ENCODE measurements at regions of chr14 and their contacts with region 1.

Region 1: GRCh38 chr14:105300792-105301533 is at the start of gene BRF1:
- DNase-seq: peak; percentile 100
- ATAC-seq: peak; percentile 92
- H3K4me3 Mint-ChIP-seq: peak within 1 kb of the TSS; percentile 86
- H3K27ac Mint-ChIP-seq: peak within 1 kb of the TSS; percentile 86
- H3K4me1 Mint-ChIP-seq: peaks cover 39% of the 10 kb centered on the region
- H3K27me3 Mint-ChIP-seq: no peaks in the 10 kb centered on the region
- total RNA-seq, gene BRF1: 20.0 to 28.1 TPM

Region 2: DNA sequence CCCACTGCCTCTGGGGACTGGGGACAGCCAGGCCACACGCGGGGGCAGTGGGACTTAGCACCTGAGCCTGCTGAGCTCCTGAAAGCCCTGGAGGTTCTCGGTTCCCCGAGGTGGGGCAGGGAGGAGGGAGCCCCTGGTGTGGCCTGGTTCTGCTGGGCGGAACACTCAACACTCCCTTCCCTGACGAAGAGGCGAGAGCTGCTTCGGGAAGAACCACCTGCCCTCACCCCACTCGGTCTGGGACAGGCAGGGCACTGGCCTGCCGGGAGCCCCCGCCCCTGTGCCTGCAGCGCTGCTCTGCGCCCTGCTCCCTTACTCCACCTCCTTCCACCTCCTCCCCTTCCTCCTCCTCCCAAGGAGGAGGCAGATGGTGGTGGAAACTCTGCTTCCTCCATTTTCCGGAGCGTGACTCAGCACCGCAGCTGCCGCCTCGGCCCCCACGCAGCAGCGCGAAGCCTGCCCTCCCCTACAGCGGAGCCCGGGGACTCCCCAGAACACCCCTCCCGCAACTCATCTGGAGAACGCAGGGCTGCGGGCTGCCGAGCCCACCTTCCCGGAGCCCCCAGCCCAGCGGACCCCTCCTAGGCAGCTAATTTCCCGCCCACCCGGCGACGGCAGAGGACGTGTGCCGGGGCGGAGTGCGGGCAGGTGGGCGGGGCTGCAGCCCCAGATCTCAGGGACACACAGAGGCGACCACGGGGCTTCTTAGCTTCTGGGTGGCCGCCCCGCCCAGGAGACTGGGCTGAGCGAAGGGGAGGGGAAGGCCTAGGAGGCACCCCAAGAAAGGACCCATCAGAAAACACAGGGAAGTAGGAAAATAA is 623.2 kb before region 1 on chr14:
- CTCF ChIA-PET with region 1: no interaction called
- POLR2A ChIA-PET with region 1: no interaction called
- intact Hi-C with region 1: loop called in 1 of 2 experiments (anchors 5 kb)
- DNase-seq: peak; percentile 88
- ATAC-seq: peak; percentile 81
- H3K4me3 Mint-ChIP-seq: peak overlapping the region; percentile 62
- H3K27ac Mint-ChIP-seq: peak overlapping the region; percentile 79
- H3K4me1 Mint-ChIP-seq: peaks cover 14% of the 10 kb centered on the region
- H3K27me3 Mint-ChIP-seq: no peaks in the 10 kb centered on the region

Region 3: GRCh38 chr14:104985675-104986525 is 315.1 kb before region 1 on chr14 and contains the start of gene CLBA1:
- CTCF ChIA-PET with region 1: no interaction called
- POLR2A ChIA-PET with region 1: no interaction called
- intact Hi-C with region 1: loop called in 1 of 2 experiments (anchors 1 kb)
- DNase-seq: peak; percentile 93
- ATAC-seq: peak; percentile 99
- H3K4me3 Mint-ChIP-seq: peak within 1 kb of the TSS; percentile 64
- H3K27ac Mint-ChIP-seq: peak within 1 kb of the TSS; percentile 47
- H3K4me1 Mint-ChIP-seq: peaks cover 5% of the 10 kb centered on the region
- H3K27me3 Mint-ChIP-seq: no peaks in the 10 kb centered on the region
- total RNA-seq, gene CLBA1: 1.1 to 1.9 TPM

Region 4: GRCh38 chr14:105180592-105181548 is 120.1 kb before region 1 on chr14 and contains the start of gene NUDT14:
- CTCF ChIA-PET with region 1: no interaction called
- POLR2A ChIA-PET with region 1: no interaction called
- intact Hi-C with region 1: loop called in 1 of 2 experiments (anchors 1 kb)
- DNase-seq: peak; percentile 93
- ATAC-seq: peak; percentile 90
- H3K4me3 Mint-ChIP-seq: peak within 1 kb of the TSS; percentile 69
- H3K27ac Mint-ChIP-seq: no peak within 1 kb of the TSS
- H3K4me1 Mint-ChIP-seq: peaks cover 10% of the 10 kb centered on the region
- H3K27me3 Mint-ChIP-seq: no peaks in the 10 kb centered on the region
- total RNA-seq, gene NUDT14: 12.3 to 13.5 TPM

Region 5: DNA sequence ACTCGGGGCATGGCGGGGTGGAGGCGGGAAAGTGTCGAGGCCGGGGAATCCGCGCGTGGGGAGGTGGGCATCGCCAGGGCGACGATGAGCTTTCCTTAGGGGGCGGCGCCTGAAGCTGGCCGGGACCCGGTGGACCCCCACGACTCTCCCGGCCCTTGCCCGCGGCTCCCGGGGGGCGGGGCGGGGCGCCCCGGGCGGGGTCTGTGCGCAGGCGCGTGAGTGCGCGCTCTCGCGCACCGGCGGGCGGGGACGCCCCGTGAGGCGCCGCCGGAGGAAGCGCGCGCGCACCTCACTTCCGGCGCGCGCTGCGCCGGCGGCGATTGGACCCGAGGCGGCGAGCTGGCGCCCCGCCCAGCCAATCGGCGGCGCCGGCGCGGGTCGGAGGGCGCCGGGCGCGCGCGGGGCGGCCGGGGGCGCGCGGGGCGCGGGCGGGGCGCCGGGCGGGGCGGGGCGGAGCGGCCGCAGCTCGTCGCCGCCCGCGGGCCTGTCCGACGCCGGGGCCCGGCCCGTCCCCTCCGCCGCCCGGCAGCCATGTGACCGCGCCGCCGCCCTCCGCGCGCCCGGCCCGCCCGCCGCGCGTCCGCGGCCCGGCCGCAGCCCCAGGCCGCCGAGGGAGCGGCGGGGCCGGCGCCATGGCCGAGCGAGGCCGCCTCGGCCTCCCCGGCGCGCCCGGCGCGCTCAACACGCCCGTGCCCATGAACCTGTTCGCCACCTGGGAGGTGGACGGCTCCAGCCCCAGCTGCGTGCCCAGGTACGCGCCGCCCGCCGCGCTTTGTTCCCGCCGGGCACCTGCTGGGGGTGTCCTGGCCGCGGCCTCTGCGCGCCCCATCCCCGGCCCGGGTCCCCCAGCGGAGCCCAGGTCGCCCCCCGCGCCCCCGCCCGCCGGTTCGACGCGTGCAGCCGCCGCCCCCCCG is 13.6 kb after region 1 on chr14 and contains the start of gene PACS2:
- CTCF ChIA-PET with region 1: interaction called, 11 read pairs
- POLR2A ChIA-PET with region 1: interaction called, 23 read pairs
- intact Hi-C with region 1: loop called (anchors 1 to 2 kb)
- DNase-seq: peak; percentile 86
- ATAC-seq: peak; percentile 79
- H3K4me3 Mint-ChIP-seq: peak within 1 kb of the TSS; percentile 84
- H3K27ac Mint-ChIP-seq: peak within 1 kb of the TSS; percentile 71
- H3K4me1 Mint-ChIP-seq: peaks cover 30% of the 10 kb centered on the region
- H3K27me3 Mint-ChIP-seq: no peaks in the 10 kb centered on the region
- total RNA-seq, gene PACS2: 30.6 to 32.9 TPM

Region 6: GRCh38 chr14:105430535-105430934 is 129.6 kb after region 1 on chr14:
- CTCF ChIA-PET with region 1: no interaction called
- POLR2A ChIA-PET with region 1: no interaction called
- intact Hi-C with region 1: no loop called
- DNase-seq: no peak
- ATAC-seq: no peak
- H3K4me3 Mint-ChIP-seq: no peak overlapping the region
- H3K27ac Mint-ChIP-seq: no peak overlapping the region
- H3K4me1 Mint-ChIP-seq: peaks cover 14% of the 10 kb centered on the region
- H3K27me3 Mint-ChIP-seq: no peaks in the 10 kb centered on the region

Region 7: GRCh38 chr14:105480952-105481801 is 180.2 kb after region 1 on chr14:
- CTCF ChIA-PET with region 1: no interaction called
- POLR2A ChIA-PET with region 1: interaction called, 3 read pairs
- intact Hi-C with region 1: loop called in 1 of 2 experiments (anchors 2 kb)
- DNase-seq: peak; percentile 95
- ATAC-seq: peak; percentile 69
- H3K4me3 Mint-ChIP-seq: peak overlapping the region; percentile 62
- H3K27ac Mint-ChIP-seq: peak overlapping the region; percentile 87
- H3K4me1 Mint-ChIP-seq: peaks cover 48% of the 10 kb centered on the region
- H3K27me3 Mint-ChIP-seq: peaks cover 5% of the 10 kb centered on the region

Region 8: GRCh38 chr14:106163306-106163705 is 862.3 kb after region 1 on chr14:
- CTCF ChIA-PET with region 1: no interaction called
- POLR2A ChIA-PET with region 1: no interaction called
- intact Hi-C with region 1: no loop called
- DNase-seq: no peak
- ATAC-seq: no peak
- H3K4me3 Mint-ChIP-seq: no peak overlapping the region
- H3K27ac Mint-ChIP-seq: no peak overlapping the region
- H3K4me1 Mint-ChIP-seq: peaks cover 17% of the 10 kb centered on the region
- H3K27me3 Mint-ChIP-seq: peaks cover 6% of the 10 kb centered on the region

Measured in activated CD4-positive, alpha-beta T cell treated with anti-CD3 and anti-CD28 coated beads for 36 hours (primary cell).